Activated CD4-positive, alpha-beta T cell treated with anti-CD3 and anti-CD28 coated beads, Interleukin-2, amount 10 ng/mL, durations not matched to agents 7 days and 5 days (primary cell): ENCODE measurements at regions of chr1 and their contacts with region 1.

Region 1: DNA sequence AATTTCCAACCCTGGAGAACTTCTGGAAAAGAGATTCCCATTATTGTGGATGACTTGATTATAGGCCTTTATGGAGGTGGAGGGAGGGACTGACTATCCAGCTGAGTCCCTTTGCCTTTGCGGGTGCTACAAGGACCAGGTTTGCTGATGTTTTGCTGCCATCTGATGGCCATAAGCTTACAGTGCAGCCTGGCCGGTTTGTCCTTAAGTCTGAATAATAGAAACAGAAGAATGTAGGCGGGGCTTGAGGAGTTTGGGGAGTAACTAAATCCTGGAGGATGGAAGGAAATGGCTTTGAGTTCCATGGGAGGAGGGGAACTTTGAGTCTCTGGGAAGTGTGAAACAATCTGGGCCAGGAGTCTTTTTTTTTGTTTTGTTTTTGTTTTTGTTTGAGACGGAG is 55.7 kb upstream of the CD1D start:
- DNase-seq: peak; percentile 79
- H3K4me3 Mint-ChIP-seq: no peak overlapping the region
- H3K27ac Mint-ChIP-seq: no peak overlapping the region
- H3K4me1 Mint-ChIP-seq: peaks cover 15% of the 10 kb centered on the region
- H3K27me3 Mint-ChIP-seq: peaks cover 30% of the 10 kb centered on the region

Region 2: DNA sequence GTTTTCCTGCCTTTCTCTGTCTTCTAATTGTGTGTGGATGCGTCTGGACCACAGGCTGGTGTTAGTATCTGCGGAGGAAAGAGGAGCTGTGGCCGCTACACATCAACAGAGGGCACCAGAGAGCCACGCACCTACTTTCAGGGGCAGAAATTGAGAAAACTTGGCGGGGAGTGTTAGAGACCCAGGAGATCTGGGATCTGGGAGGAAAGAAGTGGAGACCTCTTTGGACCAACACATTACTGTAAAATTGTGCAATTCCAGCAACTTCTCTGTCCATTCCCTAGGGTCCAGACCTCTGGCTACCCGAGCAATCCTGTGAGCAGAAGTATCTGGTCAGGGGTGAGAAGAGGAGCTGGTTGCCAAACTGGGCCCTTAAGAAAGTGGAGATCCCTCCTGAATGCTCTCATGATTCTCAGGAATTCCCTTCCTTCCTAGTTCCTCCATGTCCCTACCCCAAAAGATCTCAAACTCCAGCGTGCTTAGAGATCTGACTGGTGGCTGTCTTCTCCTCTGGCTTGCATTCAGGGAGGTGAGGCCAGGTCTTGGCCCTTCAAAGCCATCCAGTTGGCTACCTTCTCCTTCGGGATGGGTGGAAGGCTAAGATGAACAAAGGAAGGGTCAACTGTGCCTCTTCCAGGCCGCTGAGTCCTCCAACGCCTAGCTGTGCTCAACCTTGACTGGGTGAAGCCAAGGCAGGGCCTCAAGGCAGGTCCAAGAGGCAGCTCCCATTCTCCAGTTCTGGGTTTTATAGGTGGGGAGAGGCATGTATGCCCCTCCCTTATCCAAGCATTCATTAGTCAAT is 132.8 kb before region 1 on chr1:
- CTCF ChIA-PET with region 1: interaction called, 13 read pairs
- POLR2A ChIA-PET with region 1: no interaction called
- DNase-seq: peak; percentile 55
- H3K4me3 Mint-ChIP-seq: no peak overlapping the region
- H3K27ac Mint-ChIP-seq: no peak overlapping the region
- H3K4me1 Mint-ChIP-seq: peaks cover 9% of the 10 kb centered on the region
- H3K27me3 Mint-ChIP-seq: peaks cover 46% of the 10 kb centered on the region